Psoas muscle (tissue), 8 donors: ENCODE measurements at regions of chr2 and their contacts with region 1.

Region 1: DNA sequence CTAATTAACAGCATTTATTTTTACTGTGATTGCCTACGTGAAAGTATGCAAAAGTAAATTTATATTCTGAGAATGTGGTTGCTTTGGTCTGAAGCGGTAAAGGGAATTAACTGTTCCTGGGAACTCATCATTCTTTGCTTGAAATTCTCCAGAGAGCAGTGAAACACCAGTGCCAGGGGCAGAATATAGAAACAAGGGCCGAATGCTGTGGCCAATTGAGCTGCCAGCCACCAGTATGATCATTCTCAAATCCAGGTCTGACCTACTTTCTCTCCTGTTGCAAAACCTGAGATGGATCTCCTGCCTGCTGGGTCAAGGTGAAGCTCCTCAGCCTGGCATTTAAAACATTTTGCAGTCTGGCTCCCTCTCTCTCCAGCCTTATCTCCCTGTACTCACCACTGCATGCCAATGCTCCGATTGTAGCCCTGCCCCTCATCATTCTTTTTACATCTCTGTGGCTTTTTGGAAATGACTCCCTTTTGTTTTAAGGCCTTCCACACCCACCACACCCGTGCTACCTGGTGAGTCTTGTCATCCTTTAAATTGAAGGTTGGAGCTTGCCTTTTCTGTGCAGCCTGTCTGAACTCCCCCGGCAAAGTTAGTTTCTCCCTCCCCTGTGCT is 94.5 kb upstream of the TMEM178A start:
- DNase-seq: no peak
- ATAC-seq: peak; percentile 89 to 96 (median 92)
- H3K4me3 ChIP-seq: peak overlapping the region; percentile 35
- H3K27ac ChIP-seq: peak overlapping the region; percentile 56
- H3K4me1 ChIP-seq: peaks cover 34% of the 10 kb centered on the region
- H3K27me3 ChIP-seq: no peaks in the 10 kb centered on the region
- CTCF ChIP-seq: no peak

Region 2: DNA sequence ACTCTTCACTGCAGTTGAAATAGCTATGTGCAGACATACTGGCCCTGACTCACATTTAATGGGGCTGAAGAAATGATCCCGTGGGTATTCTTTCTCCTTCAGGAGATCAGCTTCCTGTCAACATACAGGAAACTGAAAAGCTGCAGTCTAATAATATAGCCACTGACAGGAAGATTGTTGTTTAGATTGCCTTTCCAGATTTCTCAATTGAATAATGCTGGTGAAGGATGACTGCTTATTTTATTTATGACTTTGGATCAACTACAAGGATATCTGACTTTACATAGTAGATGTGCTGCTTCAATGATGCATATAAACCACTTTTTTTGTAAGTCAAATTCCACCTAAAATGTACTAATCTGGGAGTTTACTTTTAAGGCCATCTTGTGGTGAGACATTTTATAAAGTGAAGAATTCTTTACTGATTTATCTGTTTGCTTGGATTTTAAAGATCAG is 40.8 kb before region 1 on chr2:
- intact Hi-C with region 1: loop called in 1 of 2 experiments (anchors 5 kb)
- DNase-seq: no peak
- ATAC-seq: peak; percentile 49 to 89 (median 80)
- H3K4me3 ChIP-seq: no peak overlapping the region
- H3K27ac ChIP-seq: peak overlapping the region; percentile 32
- H3K4me1 ChIP-seq: peaks cover 22% of the 10 kb centered on the region
- H3K27me3 ChIP-seq: no peaks in the 10 kb centered on the region
- CTCF ChIP-seq: no peak